HCT116 (cell line): ENCODE measurements at regions of chr5 and their contacts with region 1.

Region 1: DNA sequence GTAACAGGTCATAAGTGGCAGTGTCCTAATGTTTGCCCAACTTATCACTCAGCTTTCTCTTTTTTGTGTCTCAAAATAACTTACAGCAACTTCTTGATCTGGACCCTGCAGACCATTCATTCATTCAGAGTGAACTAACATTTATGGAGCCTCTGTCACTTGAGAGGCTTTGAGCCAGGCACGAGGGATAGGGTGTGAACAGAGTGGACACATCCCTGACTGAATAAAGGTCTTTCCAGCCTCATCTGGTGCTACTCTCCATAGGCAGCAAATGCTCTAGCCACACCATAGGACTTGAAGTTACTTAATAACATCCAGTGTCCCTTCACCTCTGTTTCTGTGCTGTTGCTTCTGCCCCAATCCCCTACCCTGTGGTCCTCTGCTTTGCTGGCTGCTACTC is 212.1 kb upstream of the FBN2 start:
- DNase-seq: no peak
- ATAC-seq: no peak
- H3K4me3 ChIP-seq: no peak overlapping the region
- H3K27ac ChIP-seq: no peak overlapping the region
- H3K4me1 ChIP-seq: no peaks in the 10 kb centered on the region
- H3K27me3 ChIP-seq: no peaks in the 10 kb centered on the region
- CTCF ChIP-seq: no peak
- POLR2A ChIP-seq: no peak
- RAD21 ChIP-seq: no peak

Region 2: DNA sequence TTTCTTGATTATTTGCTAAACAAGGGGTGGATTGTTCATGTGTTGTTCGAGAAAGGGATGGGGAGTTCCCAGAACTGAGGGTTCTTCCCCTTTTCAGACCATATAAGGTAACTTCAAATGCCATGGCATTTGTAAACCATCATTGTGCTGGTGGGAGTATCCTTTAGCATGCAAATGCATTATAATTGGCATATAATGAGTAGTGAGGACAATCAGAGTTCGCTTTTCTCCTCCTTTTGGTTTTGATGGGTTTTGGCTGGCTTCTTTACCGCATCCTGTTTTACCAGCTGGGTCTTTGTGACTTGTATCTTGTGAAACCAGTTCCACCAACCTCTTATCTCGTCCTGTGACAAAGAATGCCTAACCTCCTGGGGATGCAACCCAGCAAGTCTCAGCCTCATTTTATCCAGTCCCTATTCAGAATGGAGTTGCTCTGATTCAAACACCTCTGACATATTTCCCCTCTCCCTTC is 203.5 kb before region 1 on chr5:
- CTCF ChIA-PET with region 1: no interaction called
- POLR2A ChIA-PET with region 1: no interaction called
- RAD21 ChIA-PET with region 1: no interaction called
- intact Hi-C with region 1: no loop called
- DNase-seq: no peak
- ATAC-seq: no peak
- H3K4me3 ChIP-seq: no peak overlapping the region
- H3K27ac ChIP-seq: no peak overlapping the region
- H3K4me1 ChIP-seq: no peaks in the 10 kb centered on the region
- H3K27me3 ChIP-seq: no peaks in the 10 kb centered on the region
- CTCF ChIP-seq: no peak
- POLR2A ChIP-seq: no peak
- RAD21 ChIP-seq: no peak

Region 3: DNA sequence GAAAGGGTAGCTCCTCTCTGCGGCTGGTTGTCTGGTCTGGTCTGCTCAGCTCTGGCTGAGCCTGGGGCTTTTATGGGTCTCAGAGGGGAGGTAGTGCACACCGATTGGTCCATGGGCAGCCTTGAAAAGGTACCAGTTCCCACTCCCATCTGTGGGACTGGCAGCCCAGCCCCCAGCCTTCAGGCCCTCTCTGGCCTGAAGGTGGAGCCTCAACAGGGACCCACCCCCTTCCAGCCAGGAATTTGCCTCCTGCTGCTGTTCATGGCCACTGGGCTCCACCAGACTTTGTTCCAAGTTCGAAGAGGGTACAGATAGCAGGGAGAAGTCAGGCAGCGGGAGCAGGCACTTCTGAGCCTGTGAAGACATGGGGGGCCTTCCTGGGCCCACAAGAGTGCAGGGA is 49.8 kb after region 1 on chr5:
- CTCF ChIA-PET with region 1: no interaction called
- POLR2A ChIA-PET with region 1: no interaction called
- RAD21 ChIA-PET with region 1: no interaction called
- intact Hi-C with region 1: loop called (anchors 5 kb)
- DNase-seq: no peak
- ATAC-seq: peak; percentile 42; the same call in 1 of the 2 replicates
- H3K4me3 ChIP-seq: no peak overlapping the region
- H3K27ac ChIP-seq: no peak overlapping the region
- H3K4me1 ChIP-seq: peaks cover 0 to 5% of the 10 kb centered on the region in 2 experiments; a peak in 1 of 4 replicates
- H3K27me3 ChIP-seq: no peaks in the 10 kb centered on the region
- CTCF ChIP-seq: no peak
- POLR2A ChIP-seq: no peak
- RAD21 ChIP-seq: no peak